ENCODE measurements at regions of chr19 and their contacts with region 1.

Region 1: DNA sequence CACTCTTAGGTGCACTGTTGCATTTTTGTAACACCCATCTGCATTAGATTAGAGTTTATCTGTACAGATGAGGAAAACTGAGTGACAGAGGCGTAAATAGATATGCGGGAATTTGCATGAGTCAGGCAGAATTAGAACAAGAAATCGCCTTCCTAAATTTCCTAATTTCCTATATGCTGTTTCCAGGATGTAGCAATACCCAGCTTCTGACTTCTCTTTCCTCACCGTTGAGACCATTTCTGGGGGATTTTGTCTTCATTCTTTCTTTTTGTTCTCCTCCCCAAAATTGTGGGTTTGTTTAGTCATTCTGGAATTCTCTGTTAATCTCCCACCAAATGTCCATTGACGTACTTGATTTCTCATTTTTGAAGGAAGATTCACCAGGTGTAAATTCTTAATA is 10.6 kb upstream of the ZNF792 start:
- DNase-seq: no peak
- H3K4me3 ChIP-seq: no peak overlapping the region
- H3K27ac ChIP-seq: no peak overlapping the region
- H3K4me1 ChIP-seq: peaks cover 0 to 10% (median 7%) of the 10 kb centered on the region in 4 donors
- H3K27me3 ChIP-seq: no peaks in the 10 kb centered on the region
- CTCF ChIP-seq: no peak
- EP300 ChIP-seq: no peak
- POLR2A ChIP-seq: no peak

Region 2: DNA sequence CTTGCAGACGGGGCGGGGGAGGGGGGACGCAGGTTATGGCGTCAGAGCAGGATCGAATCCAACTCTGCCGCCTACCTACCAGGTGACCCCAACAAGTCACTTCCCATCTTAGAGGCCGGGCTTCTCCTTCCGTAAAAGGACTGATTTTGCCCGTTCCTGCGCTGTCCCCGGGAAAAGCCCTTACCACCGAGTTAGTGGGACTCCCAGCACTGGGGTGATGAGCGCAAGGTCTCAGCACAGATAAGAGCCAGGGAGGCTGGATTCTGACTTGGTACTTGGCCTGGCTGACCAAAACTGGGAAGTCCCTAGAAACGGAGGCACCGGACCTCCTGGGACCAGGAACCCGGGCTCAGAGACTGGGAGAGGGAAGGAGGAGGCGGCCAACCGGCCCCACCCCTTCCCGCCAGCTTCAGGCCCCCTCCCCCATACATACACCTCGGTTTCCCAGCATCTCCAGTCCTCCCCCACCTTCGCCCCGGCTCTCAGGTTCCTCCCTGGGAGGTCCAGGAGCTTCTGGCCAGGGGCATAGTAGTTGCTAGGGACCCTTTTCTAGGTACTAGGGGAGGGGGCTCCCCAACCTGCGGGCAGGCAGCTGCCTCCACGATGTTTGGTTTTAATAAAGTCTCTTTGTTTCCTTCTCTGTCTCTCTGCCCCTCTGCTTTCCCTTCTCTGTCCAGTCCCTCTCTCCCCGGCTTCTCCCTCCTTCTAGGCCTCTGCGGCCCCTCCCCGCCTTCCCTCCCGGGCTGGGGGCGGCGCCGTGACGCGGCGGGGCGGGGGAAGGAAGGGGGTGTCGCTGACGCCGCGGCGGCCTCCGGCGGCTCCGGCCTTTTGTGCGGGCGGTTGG is 25.1 kb after region 1 on chr19 and contains the start of gene GRAMD1A:
- intact Hi-C with region 1: no loop called
- DNase-seq: peak; percentile 95
- H3K4me3 ChIP-seq: peak within 1 kb of the TSS; percentile 83 to 99 (median 85)
- H3K27ac ChIP-seq: peak within 1 kb of the TSS; percentile 97 to 100 (median 99)
- H3K4me1 ChIP-seq: peaks cover 0 to 50% (median 38%) of the 10 kb centered on the region in 4 donors
- H3K27me3 ChIP-seq: no peaks in the 10 kb centered on the region
- CTCF ChIP-seq: no peak
- EP300 ChIP-seq: peak in 2 of 4 donors; percentile 47 to 57
- POLR2A ChIP-seq: peak; percentile 87 to 92
- total RNA-seq, gene GRAMD1A: 27.1 to 58.9 (median 43.0) TPM

Region 3: DNA sequence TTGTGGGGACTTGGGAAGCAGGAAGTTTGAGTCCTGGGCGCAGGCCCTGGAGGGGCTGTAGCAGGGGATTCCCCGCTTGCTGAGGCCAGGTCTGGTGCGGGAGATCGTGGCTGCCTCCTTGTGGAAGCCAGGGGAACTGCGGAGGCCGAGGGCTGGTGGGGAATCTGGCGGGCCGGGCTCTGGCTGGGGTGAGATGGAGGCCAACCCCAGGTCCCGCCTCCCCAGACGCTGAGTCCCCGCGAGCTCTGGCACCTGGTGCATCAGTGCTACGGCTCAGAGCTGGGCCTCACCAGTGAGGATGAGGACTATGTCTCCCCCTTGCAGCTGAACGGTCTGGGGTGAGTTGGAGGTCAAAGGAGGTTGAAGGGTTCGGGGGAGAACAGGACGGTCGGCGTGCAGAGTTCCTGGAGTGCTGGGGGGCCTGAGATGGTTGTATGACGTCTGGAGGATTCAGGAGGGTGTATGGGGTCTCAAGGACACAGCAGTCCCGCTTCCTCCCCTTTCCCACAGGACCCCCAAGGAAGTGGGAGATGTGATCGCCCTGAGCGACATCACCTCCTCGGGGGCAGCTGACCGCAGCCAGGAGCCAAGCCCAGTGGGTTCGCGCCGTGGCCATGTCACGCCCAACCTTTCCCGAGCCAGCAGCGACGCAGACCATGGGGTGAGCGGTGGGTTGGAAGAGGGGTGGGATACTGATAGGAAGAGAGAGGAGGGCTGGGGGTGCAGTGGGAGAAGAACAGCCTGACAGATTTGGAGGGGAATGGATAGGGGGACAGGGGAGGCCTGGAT is 38.6 kb after region 1 on chr19:
- intact Hi-C with region 1: loop called (anchors 1 kb)
- DNase-seq: peak; percentile 92
- H3K4me3 ChIP-seq: no peak overlapping the region
- H3K27ac ChIP-seq: peak overlapping the region; percentile 4 to 39 (median 32)
- H3K4me1 ChIP-seq: peaks cover 0 to 13% (median 9%) of the 10 kb centered on the region in 4 donors
- H3K27me3 ChIP-seq: no peaks in the 10 kb centered on the region
- CTCF ChIP-seq: peak; percentile 84 to 100 (median 98)
- EP300 ChIP-seq: no peak
- POLR2A ChIP-seq: no peak

Region 4: GRCh38 chr19:35090506-35091237 is 116.0 kb after region 1 on chr19:
- intact Hi-C with region 1: loop called (anchors 5 kb)
- DNase-seq: no peak
- H3K4me3 ChIP-seq: no peak overlapping the region
- H3K27ac ChIP-seq: no peak overlapping the region
- H3K4me1 ChIP-seq: peaks cover 0 to 11% (median 7%) of the 10 kb centered on the region in 4 donors
- H3K27me3 ChIP-seq: peaks cover 0 to 27% (median 23%) of the 10 kb centered on the region in 3 donors
- CTCF ChIP-seq: peak in 2 of 4 experiments; percentile 41 to 61
- EP300 ChIP-seq: no peak
- POLR2A ChIP-seq: no peak

Region 5: GRCh38 chr19:35124098-35125060 is 149.7 kb after region 1 on chr19:
- intact Hi-C with region 1: loop called (anchors 10 kb)
- DNase-seq: peak; percentile 97
- H3K4me3 ChIP-seq: peak overlapping the region; percentile 43 to 67 (median 56)
- H3K27ac ChIP-seq: peak overlapping the region; percentile 78 to 89 (median 84)
- H3K4me1 ChIP-seq: peaks cover 0 to 20% (median 10%) of the 10 kb centered on the region in 4 donors
- H3K27me3 ChIP-seq: no peaks in the 10 kb centered on the region
- CTCF ChIP-seq: no peak
- EP300 ChIP-seq: no peak
- POLR2A ChIP-seq: peak; percentile 76 to 91

Measured in sigmoid colon (tissue), 7 donors.